CD8-positive, alpha-beta T cell (primary cell): ENCODE measurements at regions of chr5 and their contacts with region 1.

Region 1: DNA sequence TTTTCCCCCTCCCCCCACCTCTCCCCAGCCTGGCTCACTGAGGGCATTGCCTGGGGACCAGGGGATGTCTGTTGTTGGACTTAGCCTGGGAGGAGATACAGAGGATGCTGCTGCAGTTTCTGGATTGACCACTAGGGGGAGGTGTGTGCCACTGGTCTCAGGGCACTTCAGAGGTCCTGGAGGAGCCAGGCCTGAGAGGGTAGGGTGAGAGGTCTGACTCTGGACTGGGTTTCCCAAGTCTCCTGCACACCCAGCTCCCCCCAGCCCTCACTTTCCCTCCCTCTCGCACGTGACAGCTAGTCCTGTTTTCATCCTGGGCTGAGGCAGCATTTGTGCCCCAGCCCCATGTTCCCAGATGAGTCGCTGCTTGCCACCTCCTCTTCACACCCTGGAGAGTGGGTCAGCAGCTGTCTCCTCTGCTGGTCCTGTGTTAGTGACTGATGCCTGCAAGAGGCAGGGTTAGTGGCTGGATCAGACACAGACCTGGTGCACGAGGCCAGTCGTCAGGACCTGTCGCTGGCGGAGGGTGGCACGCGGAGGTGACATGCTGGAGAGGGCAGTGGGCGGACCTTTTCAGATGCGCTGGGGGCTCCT is 4.4 kb downstream of the IL3 start:
- DNase-seq: peak; percentile 56 to 85 (median 80)
- ATAC-seq: peak; percentile 77
- H3K4me3 ChIP-seq: no peak overlapping the region
- H3K4me3 Mint-ChIP-seq: no peak overlapping the region
- H3K27ac ChIP-seq: no peak overlapping the region
- H3K27ac Mint-ChIP-seq: no peak overlapping the region
- H3K4me1 ChIP-seq: no peaks in the 10 kb centered on the region
- H3K4me1 Mint-ChIP-seq: peaks cover 2% of the 10 kb centered on the region
- H3K27me3 ChIP-seq: no peaks in the 10 kb centered on the region
- H3K27me3 Mint-ChIP-seq: no peaks in the 10 kb centered on the region
- CTCF ChIP-seq: peak; percentile 97

Region 2: GRCh38 chr5:131810510-131811249 is 254.2 kb before region 1 on chr5:
- CTCF ChIA-PET with region 1: interaction called, 4 read pairs
- POLR2A ChIA-PET with region 1: no interaction called
- intact Hi-C with region 1: loop called in 1 of 2 experiments (anchors 5 kb)
- DNase-seq: peak in 2 of 9 experiments; percentile 26 to 43
- ATAC-seq: no peak
- H3K4me3 ChIP-seq: no peak overlapping the region
- H3K4me3 Mint-ChIP-seq: no peak overlapping the region
- H3K27ac ChIP-seq: no peak overlapping the region
- H3K27ac Mint-ChIP-seq: no peak overlapping the region
- H3K4me1 ChIP-seq: no peaks in the 10 kb centered on the region
- H3K4me1 Mint-ChIP-seq: no peaks in the 10 kb centered on the region
- H3K27me3 ChIP-seq: no peaks in the 10 kb centered on the region
- H3K27me3 Mint-ChIP-seq: no peaks in the 10 kb centered on the region
- CTCF ChIP-seq: no peak

Region 3: DNA sequence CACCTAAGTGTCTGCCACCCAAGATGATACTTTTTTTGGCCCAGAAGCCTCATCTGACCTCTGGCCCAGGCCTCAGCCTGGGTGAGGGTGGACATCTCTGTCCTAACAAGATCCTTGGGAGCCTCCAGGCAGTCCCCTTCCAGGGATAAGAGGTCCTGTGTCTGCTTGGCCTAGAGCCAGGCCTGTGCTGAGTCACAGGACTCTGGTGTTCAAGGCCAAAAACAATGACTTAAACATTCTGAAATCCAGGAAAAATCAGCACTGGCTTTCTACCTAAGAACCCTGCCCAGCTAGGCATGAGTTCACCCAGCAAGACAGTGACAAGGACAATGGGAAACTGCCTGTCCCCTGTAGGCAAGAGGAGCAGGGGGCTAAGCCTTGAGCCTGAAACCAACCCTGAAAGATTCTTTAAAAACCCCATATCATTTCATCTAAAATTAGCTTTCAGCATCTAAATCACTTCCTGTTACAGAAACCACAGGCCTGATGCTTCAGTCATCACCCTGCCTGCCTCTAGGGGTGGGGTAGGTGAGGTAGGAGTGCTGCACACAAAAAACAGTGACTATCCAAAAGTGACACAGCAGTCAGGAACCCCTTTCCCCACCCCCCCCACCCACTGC is 38.6 kb after region 1 on chr5:
- CTCF ChIA-PET with region 1: interaction called, 8 read pairs
- POLR2A ChIA-PET with region 1: no interaction called
- intact Hi-C with region 1: loop called in 1 of 2 experiments (anchors 2 kb)
- DNase-seq: peak; percentile 46 to 90 (median 73)
- ATAC-seq: peak; percentile 79
- H3K4me3 ChIP-seq: no peak overlapping the region
- H3K4me3 Mint-ChIP-seq: peak overlapping the region; percentile 29
- H3K27ac ChIP-seq: peak overlapping the region; percentile 15 to 89
- H3K27ac Mint-ChIP-seq: peak overlapping the region; percentile 83
- H3K4me1 ChIP-seq: peaks cover 54% of the 10 kb centered on the region
- H3K4me1 Mint-ChIP-seq: peaks cover 68% of the 10 kb centered on the region
- H3K27me3 ChIP-seq: no peaks in the 10 kb centered on the region
- H3K27me3 Mint-ChIP-seq: no peaks in the 10 kb centered on the region
- CTCF ChIP-seq: peak; percentile 22

Region 4: DNA sequence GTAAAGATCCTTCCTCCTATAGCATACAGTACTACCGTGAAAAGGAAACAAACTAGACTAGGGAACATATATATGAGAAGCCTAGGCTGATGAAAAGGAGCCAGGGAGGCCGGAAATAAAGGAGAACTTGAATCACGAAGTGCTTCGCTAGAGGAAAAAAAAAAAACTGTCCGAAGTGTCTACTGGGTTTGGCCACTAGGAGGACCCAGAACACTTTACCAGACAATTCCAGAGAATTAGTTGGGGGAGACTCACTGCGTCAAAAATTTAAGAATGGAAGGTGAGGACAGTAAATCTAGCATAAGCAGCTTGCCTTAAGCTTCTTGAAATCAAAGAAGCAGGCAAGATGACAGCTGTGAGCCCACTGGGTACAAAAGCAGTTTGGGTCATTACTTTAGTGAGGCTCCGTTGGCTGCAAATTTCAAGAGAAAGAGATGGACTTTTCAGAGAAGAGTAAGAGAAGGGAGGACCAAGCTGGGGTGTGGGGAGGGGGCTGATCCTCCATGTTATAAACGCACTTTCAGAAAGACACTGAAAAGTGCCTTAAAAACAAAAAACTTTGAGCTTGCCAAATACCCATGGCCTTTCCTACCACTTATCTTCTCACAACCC is 115.4 kb after region 1 on chr5:
- CTCF ChIA-PET with region 1: interaction called, 4 read pairs
- POLR2A ChIA-PET with region 1: no interaction called
- intact Hi-C with region 1: loop called (anchors 2 to 5 kb)
- DNase-seq: peak in 2 of 9 experiments; percentile 18 to 39
- ATAC-seq: no peak
- H3K4me3 ChIP-seq: no peak overlapping the region
- H3K4me3 Mint-ChIP-seq: no peak overlapping the region
- H3K27ac ChIP-seq: no peak overlapping the region
- H3K27ac Mint-ChIP-seq: no peak overlapping the region
- H3K4me1 ChIP-seq: no peaks in the 10 kb centered on the region
- H3K4me1 Mint-ChIP-seq: peaks cover 14% of the 10 kb centered on the region
- H3K27me3 ChIP-seq: no peaks in the 10 kb centered on the region
- H3K27me3 Mint-ChIP-seq: no peaks in the 10 kb centered on the region
- CTCF ChIP-seq: peak; percentile 30

Region 5: GRCh38 chr5:132293066-132293991 is 228.5 kb after region 1 on chr5:
- CTCF ChIA-PET with region 1: no interaction called
- POLR2A ChIA-PET with region 1: no interaction called
- intact Hi-C with region 1: loop called in 1 of 2 experiments (anchors 10 kb)
- DNase-seq: peak; percentile 24 to 82 (median 63)
- ATAC-seq: peak; percentile 53
- H3K4me3 ChIP-seq: peak overlapping the region; percentile 76 to 87
- H3K4me3 Mint-ChIP-seq: peak overlapping the region; percentile 90
- H3K27ac ChIP-seq: peak overlapping the region; percentile 42 to 50
- H3K27ac Mint-ChIP-seq: peak overlapping the region; percentile 77
- H3K4me1 ChIP-seq: peaks cover 14% of the 10 kb centered on the region
- H3K4me1 Mint-ChIP-seq: peaks cover 16% of the 10 kb centered on the region
- H3K27me3 ChIP-seq: peaks cover 0 to 2% of the 10 kb centered on the region in 2 experiments
- H3K27me3 Mint-ChIP-seq: peaks cover 15% of the 10 kb centered on the region
- CTCF ChIP-seq: no peak